ENCODE measurements at regions of chr1 and their contacts with region 1.

Region 1: GRCh38 chr1:58546520-58547308 is at the start of gene OMA1:
- DNase-seq: peak; percentile 95 to 96
- H3K4me3 ChIP-seq: peak within 1 kb of the TSS; percentile 51
- H3K4me3 Mint-ChIP-seq: peak within 1 kb of the TSS; percentile 78
- H3K27ac Mint-ChIP-seq: peak within 1 kb of the TSS; percentile 81
- H3K4me1 ChIP-seq: no peaks in the 10 kb centered on the region
- H3K4me1 Mint-ChIP-seq: peaks cover 18% of the 10 kb centered on the region
- H3K27me3 ChIP-seq: no peaks in the 10 kb centered on the region
- H3K27me3 Mint-ChIP-seq: no peaks in the 10 kb centered on the region
- CTCF ChIP-seq: peak; percentile 75 to 88
- total RNA-seq, gene OMA1: 6.9 and 8.1 TPM in 2 replicates

Region 2: DNA sequence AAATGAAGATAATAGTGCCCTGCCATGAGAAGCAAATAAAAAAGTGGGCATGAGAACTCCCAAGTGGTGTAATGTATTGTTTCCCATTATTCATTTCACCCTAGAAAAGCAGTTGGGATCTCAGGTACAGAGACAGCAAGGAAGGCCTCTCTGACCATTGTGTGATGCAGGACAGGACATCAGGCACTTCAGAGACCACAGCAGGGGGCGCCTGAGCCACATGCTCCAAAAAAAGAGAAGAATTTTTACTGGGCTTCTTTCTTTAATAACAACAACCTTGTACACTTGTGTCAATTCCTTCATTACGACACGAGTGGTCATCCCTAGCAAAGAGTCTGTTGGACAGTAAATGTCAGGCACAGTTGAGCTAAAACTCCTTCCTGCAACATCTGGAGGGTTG is 533.5 kb before region 1 on chr1:
- CTCF ChIA-PET with region 1: no interaction called
- POLR2A ChIA-PET with region 1: no interaction called
- intact Hi-C with region 1: loop called (anchors 2 kb)
- DNase-seq: no peak
- H3K4me3 ChIP-seq: no peak overlapping the region
- H3K4me3 Mint-ChIP-seq: no peak overlapping the region
- H3K27ac Mint-ChIP-seq: no peak overlapping the region
- H3K4me1 ChIP-seq: no peaks in the 10 kb centered on the region
- H3K4me1 Mint-ChIP-seq: no peaks in the 10 kb centered on the region
- H3K27me3 ChIP-seq: no peaks in the 10 kb centered on the region
- H3K27me3 Mint-ChIP-seq: peaks cover 10% of the 10 kb centered on the region
- CTCF ChIP-seq: peak in 1 of 2 experiments; percentile 31

Region 3: DNA sequence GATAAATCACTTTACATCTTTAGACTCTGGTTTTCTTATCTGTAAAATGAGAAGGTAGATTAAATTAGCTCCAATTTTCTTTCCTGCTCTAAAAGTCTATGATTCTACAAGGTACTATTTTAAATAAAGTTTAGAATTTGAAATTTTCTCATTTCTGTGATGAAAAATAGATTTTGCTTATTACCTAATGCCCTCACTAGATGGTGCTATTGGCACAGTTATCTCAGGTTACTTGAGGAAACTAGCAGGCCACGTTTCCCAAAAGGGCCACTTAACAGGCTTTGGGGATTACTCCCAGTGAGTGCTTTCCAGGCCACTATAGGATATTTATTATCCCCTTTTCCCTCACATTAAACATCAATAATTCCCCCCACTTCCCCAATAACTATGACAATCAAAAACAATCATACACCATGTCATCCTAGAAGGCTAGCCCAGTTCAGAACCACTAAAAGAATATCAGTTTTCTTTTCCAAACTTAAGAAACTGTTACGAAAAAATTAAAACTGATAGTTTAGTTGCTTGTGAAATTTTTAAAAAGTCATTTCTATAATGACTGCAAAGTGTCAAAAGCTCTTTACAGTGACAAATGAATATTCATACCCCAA is 30.8 kb before region 1 on chr1:
- CTCF ChIA-PET with region 1: no interaction called
- POLR2A ChIA-PET with region 1: no interaction called
- intact Hi-C with region 1: loop called (anchors 1 kb)
- DNase-seq: peak in 1 of 2 experiments; percentile 38
- H3K4me3 ChIP-seq: no peak overlapping the region
- H3K4me3 Mint-ChIP-seq: no peak overlapping the region
- H3K27ac Mint-ChIP-seq: no peak overlapping the region
- H3K4me1 ChIP-seq: no peaks in the 10 kb centered on the region
- H3K4me1 Mint-ChIP-seq: no peaks in the 10 kb centered on the region
- H3K27me3 ChIP-seq: no peaks in the 10 kb centered on the region
- H3K27me3 Mint-ChIP-seq: no peaks in the 10 kb centered on the region
- CTCF ChIP-seq: peak; percentile 36 to 43

Region 4: GRCh38 chr1:58576727-58577653 is 30.3 kb after region 1 on chr1 and contains the start of gene TACSTD2:
- CTCF ChIA-PET with region 1: no interaction called
- POLR2A ChIA-PET with region 1: interaction called, 3 read pairs
- intact Hi-C with region 1: loop called (anchors 2 kb)
- DNase-seq: peak; percentile 87
- H3K4me3 ChIP-seq: peak within 1 kb of the TSS; percentile 66
- H3K4me3 Mint-ChIP-seq: peak within 1 kb of the TSS; percentile 85
- H3K27ac Mint-ChIP-seq: peak within 1 kb of the TSS; percentile 91
- H3K4me1 ChIP-seq: peaks cover 7% of the 10 kb centered on the region; the same call in 1 of the 2 replicates
- H3K4me1 Mint-ChIP-seq: no peaks in the 10 kb centered on the region
- H3K27me3 ChIP-seq: no peaks in the 10 kb centered on the region
- H3K27me3 Mint-ChIP-seq: no peaks in the 10 kb centered on the region
- CTCF ChIP-seq: no peak
- total RNA-seq, gene TACSTD2: 25.6 and 31.9 TPM in 2 replicates

Region 5: DNA sequence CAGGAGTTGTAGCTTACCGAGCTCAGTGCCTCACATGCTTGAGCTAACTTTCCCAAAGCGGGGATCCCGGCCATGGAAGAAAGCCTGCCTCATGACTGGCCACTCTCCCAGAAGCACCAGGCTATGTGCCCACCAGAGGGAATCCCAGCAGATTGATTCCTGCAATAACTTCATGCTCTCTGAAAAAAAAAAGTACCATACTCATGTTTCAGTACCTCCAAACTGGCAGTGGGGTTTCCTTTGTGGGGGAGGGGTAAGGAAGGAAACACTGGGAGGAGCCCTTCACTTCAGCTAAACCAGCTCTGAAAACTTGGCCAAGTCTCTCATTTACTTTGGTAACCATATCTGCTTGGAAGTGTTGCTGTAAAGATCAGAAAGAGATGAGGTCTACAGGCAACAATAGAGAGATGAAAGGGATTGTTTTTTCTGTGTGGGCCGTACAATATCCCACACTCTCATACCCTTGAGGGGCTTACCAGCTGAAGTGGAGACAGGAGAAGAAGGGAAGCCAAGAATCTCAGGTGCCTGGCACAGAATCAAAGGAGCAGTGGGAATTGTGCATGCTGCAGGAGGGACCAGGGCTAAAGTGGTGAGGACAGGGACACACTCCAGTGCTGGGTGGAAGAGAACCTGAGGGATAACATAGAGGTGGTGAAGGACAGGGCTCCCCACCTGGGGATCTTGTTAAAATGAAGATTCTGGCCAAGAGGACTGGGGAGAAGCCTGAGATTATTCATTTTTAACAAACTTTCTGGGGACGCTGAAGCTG is 72.8 kb after region 1 on chr1:
- CTCF ChIA-PET with region 1: no interaction called
- POLR2A ChIA-PET with region 1: no interaction called
- intact Hi-C with region 1: loop called (anchors 1 kb)
- DNase-seq: no peak
- H3K4me3 ChIP-seq: no peak overlapping the region
- H3K4me3 Mint-ChIP-seq: peak overlapping the region; percentile 62
- H3K27ac Mint-ChIP-seq: peak overlapping the region; percentile 95
- H3K4me1 ChIP-seq: peaks cover 27% of the 10 kb centered on the region
- H3K4me1 Mint-ChIP-seq: peaks cover 42% of the 10 kb centered on the region
- H3K27me3 ChIP-seq: no peaks in the 10 kb centered on the region
- H3K27me3 Mint-ChIP-seq: no peaks in the 10 kb centered on the region
- CTCF ChIP-seq: no peak

Region 6: GRCh38 chr1:58652651-58653184 is 106.0 kb after region 1 on chr1:
- CTCF ChIA-PET with region 1: interaction called, 10 read pairs
- POLR2A ChIA-PET with region 1: no interaction called
- intact Hi-C with region 1: loop called (anchors 1 kb)
- DNase-seq: peak; percentile 37 to 65
- H3K4me3 ChIP-seq: no peak overlapping the region
- H3K4me3 Mint-ChIP-seq: no peak overlapping the region
- H3K27ac Mint-ChIP-seq: no peak overlapping the region
- H3K4me1 ChIP-seq: 0 out of 2 replicates have a peak, but pooled peaks cover 5% of the 10 kb centered on the region
- H3K4me1 Mint-ChIP-seq: no peaks in the 10 kb centered on the region
- H3K27me3 ChIP-seq: no peaks in the 10 kb centered on the region
- H3K27me3 Mint-ChIP-seq: no peaks in the 10 kb centered on the region
- CTCF ChIP-seq: peak; percentile 48 to 62

Measured in Caco-2 (cell line).